Heart right ventricle (tissue), 16 donors: ENCODE measurements at regions of chr11 and their contacts with region 1.

Region 1: GRCh38 chr11:134524896-134525845 is 113.1 kb upstream of the B3GAT1 start:
- DNase-seq: no peak
- ATAC-seq: no peak
- H3K4me3 ChIP-seq: no peak overlapping the region
- H3K27ac ChIP-seq: no peak overlapping the region
- H3K4me1 ChIP-seq: no peaks in the 10 kb centered on the region
- H3K27me3 ChIP-seq: peaks cover 0 to 73% (median 16%) of the 10 kb centered on the region in 7 donors
- CTCF ChIP-seq: no peak

Region 2: DNA sequence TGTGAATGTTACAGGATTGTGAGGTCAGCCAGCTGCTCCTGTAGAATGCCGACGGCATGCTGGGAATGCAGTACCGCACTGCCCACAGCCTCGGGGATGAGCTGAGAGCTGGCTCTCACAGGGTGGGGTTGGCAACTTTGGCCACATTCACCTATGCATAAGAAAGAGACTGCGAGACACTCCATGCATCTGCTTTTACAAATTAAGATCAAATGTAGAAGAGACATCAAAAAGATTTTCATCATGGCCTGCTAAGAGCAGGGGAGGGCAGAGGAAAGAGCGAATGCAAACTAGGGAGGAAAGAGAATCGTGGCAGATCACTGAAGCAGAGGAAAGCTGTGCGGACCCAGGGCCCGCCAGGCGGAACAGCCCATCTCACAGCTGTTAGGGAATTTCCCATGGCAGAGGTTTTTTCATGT is 630.1 kb before region 1 on chr11:
- intact Hi-C with region 1: no loop called
- DNase-seq: no peak
- ATAC-seq: peak in 1 of 8 donors; percentile 9
- H3K4me3 ChIP-seq: no peak overlapping the region
- H3K27ac ChIP-seq: no peak overlapping the region
- H3K4me1 ChIP-seq: peaks cover 0 to 12% (median 0%) of the 10 kb centered on the region in 9 donors
- H3K27me3 ChIP-seq: no peaks in the 10 kb centered on the region
- CTCF ChIP-seq: no peak

Region 3: DNA sequence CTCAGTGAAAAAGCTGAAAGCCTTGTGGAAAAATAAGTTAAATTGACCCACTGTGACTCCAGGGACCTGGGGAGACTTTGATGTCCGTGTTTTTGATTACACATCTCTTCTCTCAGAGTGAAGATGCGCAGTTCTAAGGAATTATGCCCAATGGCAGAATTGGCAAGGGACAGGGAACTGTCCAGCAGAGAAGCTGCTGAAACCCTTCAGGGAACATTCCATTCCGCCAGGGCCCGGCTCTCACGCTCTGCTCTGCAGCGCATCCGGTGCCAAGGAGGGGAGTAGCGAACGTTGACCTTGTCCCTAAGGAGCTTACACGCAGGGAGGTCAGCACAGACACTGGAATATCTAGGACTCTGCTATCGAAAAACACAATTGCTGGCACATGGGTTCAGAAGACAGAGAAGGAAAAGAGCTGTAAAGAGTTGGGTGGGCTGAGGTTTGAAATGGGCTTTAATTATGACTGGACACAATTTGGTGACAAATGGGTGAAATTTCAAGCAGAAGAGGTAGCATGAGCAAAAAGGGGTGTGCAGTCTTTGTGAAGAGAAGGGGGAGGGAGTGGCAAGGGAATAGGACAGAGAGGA is 48.6 kb before region 1 on chr11:
- intact Hi-C with region 1: no loop called
- DNase-seq: no peak
- ATAC-seq: no peak
- H3K4me3 ChIP-seq: no peak overlapping the region
- H3K27ac ChIP-seq: no peak overlapping the region
- H3K4me1 ChIP-seq: no peaks in the 10 kb centered on the region
- H3K27me3 ChIP-seq: peaks cover 0 to 97% (median 58%) of the 10 kb centered on the region in 7 donors
- CTCF ChIP-seq: no peak

Region 4: DNA sequence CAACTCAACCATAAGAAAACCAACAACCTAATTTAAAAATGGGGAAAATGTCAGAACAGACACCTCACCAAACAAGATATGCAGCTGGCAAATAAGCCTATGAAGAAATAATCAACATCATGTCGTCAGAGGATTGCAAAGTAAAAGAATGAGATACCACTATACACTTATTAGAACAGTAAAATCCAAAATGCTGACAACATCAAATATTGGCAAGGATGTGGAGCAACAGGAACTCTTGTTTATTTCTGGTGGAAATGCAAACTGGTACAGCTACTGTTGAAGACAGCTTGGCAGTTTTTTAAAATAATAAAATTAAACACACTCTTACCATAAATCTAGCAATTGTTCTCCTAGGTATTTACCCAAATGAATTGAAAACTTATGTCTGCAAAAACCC is 27.6 kb after region 1 on chr11:
- intact Hi-C with region 1: loop called in 1 of 10 experiments (anchors 1 kb)
- DNase-seq: peak in 1 of 2 donors; percentile 0
- ATAC-seq: no peak
- H3K4me3 ChIP-seq: no peak overlapping the region
- H3K27ac ChIP-seq: no peak overlapping the region
- H3K4me1 ChIP-seq: no peaks in the 10 kb centered on the region
- H3K27me3 ChIP-seq: peaks cover 0 to 31% (median 4%) of the 10 kb centered on the region in 7 donors
- CTCF ChIP-seq: no peak